Endothelial cell of umbilical vein (primary cell): ENCODE measurements at regions of chr12 and their contacts with region 1.

Region 1: GRCh38 chr12:106851306-106851705 is 76.8 kb downstream of the RIC8B start:
- DNase-seq: no peak
- H3K4me3 ChIP-seq: no peak overlapping the region
- H3K27ac ChIP-seq: no peak overlapping the region
- H3K4me1 ChIP-seq: no peaks in the 10 kb centered on the region
- H3K27me3 ChIP-seq: no peaks in the 10 kb centered on the region
- CTCF ChIP-seq: no peak
- POLR2A ChIP-seq: no peak

Region 2: GRCh38 chr12:105992849-105993740 is 858.2 kb before region 1 on chr12:
- CTCF ChIA-PET with region 1: no interaction called
- POLR2A ChIA-PET with region 1: no interaction called
- dilution Hi-C with region 1: no loop called
- intact Hi-C with region 1: no loop called
- DNase-seq: no peak
- H3K4me3 ChIP-seq: no peak overlapping the region
- H3K27ac ChIP-seq: no peak overlapping the region
- H3K4me1 ChIP-seq: no peaks in the 10 kb centered on the region
- H3K27me3 ChIP-seq: peaks cover 0 to 6% of the 10 kb centered on the region in 2 experiments
- CTCF ChIP-seq: no peak
- POLR2A ChIP-seq: no peak

Region 3: DNA sequence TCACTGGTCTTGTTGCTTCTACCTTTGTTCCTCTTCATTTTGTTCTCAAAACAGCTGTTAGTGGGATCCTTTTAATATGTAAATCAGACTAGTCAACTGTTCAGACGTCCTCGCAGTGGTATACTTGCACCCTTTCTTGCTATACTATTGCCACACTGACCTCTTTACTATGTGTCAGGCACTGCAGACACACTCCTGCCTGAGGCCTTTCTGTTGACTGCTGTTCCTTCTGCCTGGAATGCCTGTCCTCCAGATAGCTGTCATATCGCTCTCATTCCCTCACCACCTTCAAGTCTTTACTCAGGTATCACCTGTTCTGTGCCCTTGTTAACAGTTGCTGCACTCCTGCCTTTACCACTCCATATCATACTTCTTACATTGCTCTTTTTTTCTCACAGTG is 14.4 kb after region 1 on chr12:
- CTCF ChIA-PET with region 1: no interaction called
- POLR2A ChIA-PET with region 1: interaction called, 3 read pairs
- dilution Hi-C with region 1: no loop called
- intact Hi-C with region 1: loop called (anchors 2 kb)
- DNase-seq: no peak
- H3K4me3 ChIP-seq: no peak overlapping the region
- H3K27ac ChIP-seq: no peak overlapping the region
- H3K4me1 ChIP-seq: no peaks in the 10 kb centered on the region
- H3K27me3 ChIP-seq: no peaks in the 10 kb centered on the region
- CTCF ChIP-seq: no peak
- POLR2A ChIP-seq: no peak